Cardiac septum (tissue), 1 donor: ENCODE measurements at regions of chr13 and their contacts with region 1.

Region 1: GRCh38 chr13:21476893-21477472 is 17.9 kb upstream of the ZDHHC20 start:
- DNase-seq: peak; percentile 86

Region 2: GRCh38 chr13:21111546-21111945 is 365.4 kb before region 1 on chr13:
- intact Hi-C with region 1: loop called (anchors 5 kb)
- DNase-seq: no peak

Region 3: DNA sequence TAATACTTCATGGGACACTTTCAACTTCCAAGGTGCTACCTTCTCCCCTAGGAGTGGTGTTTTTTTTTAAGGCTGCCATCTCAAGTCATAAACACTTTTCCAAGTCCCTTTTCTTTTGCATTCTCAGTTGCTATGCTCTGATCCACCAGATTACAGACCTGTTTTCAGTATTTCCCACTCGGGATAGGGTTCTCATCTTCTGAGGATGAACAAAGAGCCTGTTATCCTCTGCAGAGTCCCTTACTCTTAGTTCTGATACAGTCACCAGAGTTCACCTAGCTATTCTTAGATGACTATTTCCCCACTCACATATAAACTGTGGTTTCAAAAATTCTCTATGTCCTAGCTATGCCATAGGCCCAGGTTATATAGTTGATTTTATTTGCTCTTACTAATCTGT is 33.8 kb before region 1 on chr13:
- intact Hi-C with region 1: no loop called
- DNase-seq: no peak